ENCODE measurements at regions of chr5 and their contacts with region 1.

Region 1: DNA sequence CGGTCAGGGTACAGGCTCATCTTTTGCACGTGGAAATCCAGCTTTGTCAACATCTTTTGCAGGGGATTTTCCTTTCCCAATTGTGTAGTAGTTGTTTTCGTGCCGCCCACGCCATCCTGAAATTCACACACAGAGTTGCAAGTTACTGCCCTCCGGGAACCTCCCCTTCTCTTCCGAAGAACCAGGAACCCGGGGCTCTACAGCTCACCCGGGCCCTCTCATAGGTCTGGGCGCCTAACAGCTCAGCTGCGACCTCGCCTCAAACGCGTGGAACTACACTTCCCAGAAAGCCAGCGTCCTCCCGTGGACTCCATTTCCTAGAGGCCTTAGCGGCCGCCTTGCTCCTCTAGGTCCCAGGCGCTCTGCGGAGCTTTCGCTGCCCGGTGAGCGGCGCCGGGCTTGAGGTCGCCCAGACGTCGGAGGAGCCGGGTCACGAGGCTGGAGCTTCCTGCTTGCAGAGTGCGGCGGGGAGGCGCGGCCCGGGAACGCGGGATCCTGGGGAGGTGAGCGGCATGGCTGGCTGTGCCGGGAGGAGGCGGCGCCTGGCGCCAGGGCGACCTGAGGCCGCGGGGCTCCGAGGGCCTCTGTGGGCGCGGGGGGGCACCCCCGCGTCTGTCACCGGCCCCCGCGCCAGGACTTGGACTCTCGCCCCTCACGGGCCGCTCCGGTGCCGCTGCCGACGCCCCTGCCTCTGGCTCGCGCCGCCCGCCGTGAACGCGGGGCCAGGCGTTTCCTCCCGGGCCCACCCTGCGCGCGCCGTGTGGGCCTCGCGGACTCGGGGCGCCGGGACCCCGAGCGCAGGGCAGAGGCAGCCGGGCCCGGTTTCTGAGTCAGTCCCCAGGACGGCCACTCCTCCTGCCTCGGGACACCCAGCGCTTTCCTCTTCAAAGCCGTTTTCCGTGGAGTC is at the start of gene ZNF354B:
- DNase-seq: peak; percentile 77 to 95
- H3K4me3 ChIP-seq: peak within 1 kb of the TSS; percentile 89 to 93
- H3K27ac ChIP-seq: peak within 1 kb of the TSS; percentile 59 to 82
- H3K4me1 ChIP-seq: no peaks in the 10 kb centered on the region
- H3K27me3 ChIP-seq: no peaks in the 10 kb centered on the region
- CTCF ChIP-seq: peak in 1 of 3 experiments; percentile 17
- total RNA-seq, gene ZNF354B: 8.3 TPM

Region 2: DNA sequence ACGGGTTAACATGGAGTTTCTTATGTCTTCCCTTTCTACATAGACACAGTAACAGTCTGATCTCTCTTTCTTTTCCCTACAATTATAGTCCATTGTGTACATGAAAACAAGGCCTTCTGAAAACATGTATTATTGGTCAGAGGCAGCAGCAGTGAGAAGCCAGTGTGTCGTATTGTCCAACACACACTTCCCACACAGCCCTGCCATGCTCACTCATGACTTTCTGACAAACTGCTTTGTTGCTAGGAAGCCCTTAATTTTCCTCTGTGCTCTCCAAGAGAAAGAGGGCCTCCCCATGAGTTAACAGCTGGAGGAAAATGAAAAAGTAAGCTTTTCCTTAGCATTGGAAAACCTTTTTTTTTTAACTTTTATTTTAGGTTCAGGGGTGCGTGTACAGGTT is 802.9 kb before region 1 on chr5:
- intact Hi-C with region 1: no loop called
- DNase-seq: no peak
- H3K4me3 ChIP-seq: no peak overlapping the region
- H3K27ac ChIP-seq: no peak overlapping the region
- H3K4me1 ChIP-seq: no peaks in the 10 kb centered on the region
- H3K27me3 ChIP-seq: no peaks in the 10 kb centered on the region
- CTCF ChIP-seq: no peak

Region 3: GRCh38 chr5:178564397-178564796 is 295.5 kb before region 1 on chr5:
- intact Hi-C with region 1: no loop called
- DNase-seq: no peak
- H3K4me3 ChIP-seq: no peak overlapping the region
- H3K27ac ChIP-seq: no peak overlapping the region
- H3K4me1 ChIP-seq: no peaks in the 10 kb centered on the region
- H3K27me3 ChIP-seq: no peaks in the 10 kb centered on the region
- CTCF ChIP-seq: no peak

Region 4: GRCh38 chr5:178732281-178732680 is 127.6 kb before region 1 on chr5:
- intact Hi-C with region 1: loop called (anchors 1 kb)
- DNase-seq: no peak
- H3K4me3 ChIP-seq: no peak overlapping the region
- H3K27ac ChIP-seq: no peak overlapping the region
- H3K4me1 ChIP-seq: peaks cover 2 to 3% of the 10 kb centered on the region in 2 donors
- H3K27me3 ChIP-seq: no peaks in the 10 kb centered on the region
- CTCF ChIP-seq: no peak

Region 5: GRCh38 chr5:178818094-178818493 is 41.8 kb before region 1 on chr5:
- intact Hi-C with region 1: no loop called
- DNase-seq: no peak
- H3K4me3 ChIP-seq: no peak overlapping the region
- H3K27ac ChIP-seq: no peak overlapping the region
- H3K4me1 ChIP-seq: no peaks in the 10 kb centered on the region
- H3K27me3 ChIP-seq: no peaks in the 10 kb centered on the region
- CTCF ChIP-seq: no peak

Region 6: GRCh38 chr5:178895651-178896571 is 36.0 kb after region 1 on chr5 and contains the start of gene ZFP2:
- intact Hi-C with region 1: loop called (anchors 1 kb)
- DNase-seq: peak in 1 of 2 donors; percentile 69
- H3K4me3 ChIP-seq: peak within 1 kb of the TSS; percentile 86 to 98
- H3K27ac ChIP-seq: peak within 1 kb of the TSS; percentile 57 to 58
- H3K4me1 ChIP-seq: no peaks in the 10 kb centered on the region
- H3K27me3 ChIP-seq: no peaks in the 10 kb centered on the region
- CTCF ChIP-seq: no peak
- total RNA-seq, gene ZFP2: 0.75 TPM

Region 7: DNA sequence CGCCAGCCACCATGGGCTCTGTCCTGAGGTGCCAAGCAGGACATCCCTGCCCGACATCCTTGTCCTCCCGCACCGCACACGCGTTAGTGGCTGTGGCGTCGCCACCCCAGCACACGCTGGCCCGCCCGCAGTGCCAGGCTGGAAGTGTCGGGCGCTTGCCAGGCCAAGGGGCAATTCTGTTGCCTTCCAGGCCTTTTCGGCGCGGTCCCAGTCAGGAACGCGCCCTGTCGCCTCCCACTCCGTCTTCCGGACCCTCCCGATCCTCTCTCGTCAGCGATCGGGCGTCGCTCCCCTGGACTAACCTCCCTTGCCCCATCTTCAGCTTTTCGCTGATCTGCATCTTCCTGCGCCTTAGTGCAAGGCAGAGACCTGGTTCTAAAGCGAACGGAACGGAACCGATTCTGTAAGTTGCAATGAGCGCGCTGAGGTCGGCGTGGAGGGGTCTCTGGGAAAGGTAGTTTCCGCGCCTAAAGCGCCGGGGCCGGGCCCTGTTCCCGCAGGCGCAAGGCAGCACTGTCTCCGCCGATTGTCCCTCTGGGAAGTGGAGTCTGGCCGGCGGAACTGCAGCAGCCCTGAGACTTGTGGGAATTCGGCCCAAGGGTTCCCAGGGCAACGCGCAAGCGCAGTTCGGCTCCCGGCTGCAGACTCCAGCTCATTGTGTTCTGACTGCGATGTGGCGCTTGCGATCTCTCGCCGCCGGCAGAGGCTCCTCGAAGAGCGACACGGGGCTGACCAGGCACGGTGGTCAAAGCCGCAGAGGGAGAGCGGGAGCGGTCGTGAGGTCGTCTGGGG is 80.9 kb after region 1 on chr5 and contains the start of gene ZNF454:
- intact Hi-C with region 1: loop called (anchors 5 kb)
- DNase-seq: peak; percentile 35 to 91
- H3K4me3 ChIP-seq: peak within 1 kb of the TSS; percentile 62 to 74
- H3K27ac ChIP-seq: peak within 1 kb of the TSS; percentile 73 to 84
- H3K4me1 ChIP-seq: peaks cover 0 to 4% of the 10 kb centered on the region in 2 donors
- H3K27me3 ChIP-seq: no peaks in the 10 kb centered on the region
- CTCF ChIP-seq: no peak
- total RNA-seq, gene ZNF454: 2.8 TPM

Region 8: DNA sequence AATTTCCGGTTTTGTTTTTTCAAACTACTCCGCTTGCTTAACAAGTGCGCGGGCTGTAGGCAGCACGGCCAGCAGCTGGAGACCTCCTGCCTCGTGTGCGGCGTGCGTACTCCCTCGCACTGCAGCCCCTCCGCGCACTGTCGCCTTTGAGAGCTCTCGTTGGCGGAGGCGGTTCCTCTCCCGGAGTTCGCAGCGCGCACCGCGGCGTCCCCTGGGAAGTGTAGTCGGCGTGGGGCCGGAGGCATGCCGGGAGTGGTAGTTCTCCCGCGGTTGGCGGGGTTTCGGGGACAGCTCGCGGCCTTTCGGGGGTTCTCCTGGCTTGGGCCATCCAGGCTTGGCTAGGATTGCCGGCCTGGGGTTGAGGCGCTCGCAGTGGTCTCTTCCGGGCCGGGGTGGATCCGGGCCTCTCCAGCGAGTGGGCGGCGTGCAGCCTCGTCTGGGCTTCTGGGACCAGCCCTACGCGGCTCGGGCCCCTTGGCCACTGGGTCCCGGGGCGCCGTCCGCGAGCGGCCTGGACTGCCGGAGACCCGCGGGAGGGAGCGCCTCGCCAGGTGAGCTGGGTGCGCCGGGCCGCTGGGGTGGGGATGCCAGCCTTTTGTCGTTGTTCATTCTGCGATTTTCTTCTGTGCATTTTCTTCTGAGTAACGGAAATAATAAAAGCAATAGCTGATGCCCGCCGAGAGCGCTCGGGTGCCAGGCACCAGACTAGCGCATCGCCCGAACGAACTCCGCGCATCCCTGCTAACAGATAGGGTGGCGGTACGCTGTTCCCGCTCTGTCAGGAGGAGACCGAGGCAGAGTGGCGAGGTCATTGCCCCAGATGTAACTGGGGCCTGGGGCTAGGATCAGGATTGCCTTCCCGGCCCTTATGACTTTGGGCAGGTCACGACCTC is 200.5 kb after region 1 on chr5 and contains the start of gene ZNF354C:
- intact Hi-C with region 1: loop called (anchors 1 kb)
- DNase-seq: peak; percentile 29 to 93
- H3K4me3 ChIP-seq: peak within 1 kb of the TSS; percentile 73 to 92
- H3K27ac ChIP-seq: peak within 1 kb of the TSS; percentile 65 to 71
- H3K4me1 ChIP-seq: peaks cover 0 to 3% of the 10 kb centered on the region in 2 donors
- H3K27me3 ChIP-seq: no peaks in the 10 kb centered on the region
- CTCF ChIP-seq: no peak
- total RNA-seq, gene ZNF354C: 3.0 TPM

Measured in ascending aorta (tissue), 2 donors.